HEK293 (cell line): ENCODE measurements at regions of chr11 and their contacts with region 1.

Region 1: DNA sequence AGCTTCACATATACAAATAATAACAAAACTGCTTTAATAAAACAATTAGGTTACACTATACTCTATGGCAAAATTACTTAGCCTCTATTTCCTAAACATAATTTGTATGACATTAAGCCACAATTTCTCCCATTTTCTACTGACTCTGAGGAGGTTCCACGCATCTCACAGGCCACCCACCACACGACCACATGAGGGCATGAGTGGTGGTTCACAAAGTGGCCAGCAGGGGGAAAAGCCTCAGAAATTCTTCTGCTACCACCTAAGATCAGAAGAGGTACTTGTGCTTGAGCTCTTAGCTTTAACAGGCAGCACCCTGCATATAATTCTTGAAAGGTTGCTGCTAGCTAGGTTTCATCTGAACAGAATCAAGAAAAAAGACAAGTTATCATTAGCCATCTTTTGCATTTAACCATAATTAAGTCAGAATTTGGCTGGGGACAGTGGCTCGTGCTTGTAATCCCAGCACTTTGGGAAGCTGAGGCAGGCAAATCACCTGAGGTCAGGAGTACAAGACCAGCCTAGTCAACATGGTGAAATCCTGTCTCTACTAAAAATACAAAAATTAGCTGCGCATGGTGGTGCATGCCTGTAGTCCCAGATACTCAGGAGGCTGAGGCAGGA is 7.7 kb downstream of the LPXN start:
- H3K4me3 ChIP-seq: no peak overlapping the region
- H3K27ac ChIP-seq: no peak overlapping the region
- H3K4me1 ChIP-seq: no peaks in the 10 kb centered on the region
- CTCF ChIP-seq: no peak

Region 2: DNA sequence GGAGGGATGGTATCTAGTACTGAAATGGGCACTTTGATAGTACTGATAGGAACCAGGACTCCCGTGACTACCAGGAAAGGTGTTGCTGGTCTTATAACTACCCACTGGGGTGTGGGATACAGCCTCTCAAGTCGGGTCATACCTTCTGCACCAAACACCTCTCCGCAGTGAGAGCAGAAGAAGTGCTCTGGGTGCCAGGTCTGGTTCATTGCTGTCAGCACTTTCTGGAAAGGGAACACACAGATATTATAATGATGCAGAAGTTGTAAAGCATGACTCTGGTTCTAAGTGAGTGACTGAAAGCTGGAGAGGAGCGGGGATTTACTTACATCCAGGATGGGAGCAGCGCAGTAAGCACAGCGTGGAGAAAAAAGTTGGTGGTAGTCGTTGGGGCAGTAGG is 18.4 kb before region 1 on chr11:
- CTCF ChIA-PET with region 1: interaction called, 16 read pairs
- POLR2A ChIA-PET with region 1: no interaction called
- H3K4me3 ChIP-seq: no peak overlapping the region
- H3K27ac ChIP-seq: no peak overlapping the region
- H3K4me1 ChIP-seq: no peaks in the 10 kb centered on the region
- CTCF ChIP-seq: no peak

Region 3: GRCh38 chr11:58578635-58579191 is 10.7 kb after region 1 on chr11 and contains the start of gene ZFP91:
- CTCF ChIA-PET with region 1: interaction called, 34 read pairs
- POLR2A ChIA-PET with region 1: no interaction called
- H3K4me3 ChIP-seq: peak within 1 kb of the TSS; percentile 99
- H3K27ac ChIP-seq: peak within 1 kb of the TSS; percentile 95
- H3K4me1 ChIP-seq: no peaks in the 10 kb centered on the region
- CTCF ChIP-seq: no peak